K562 (cell line): ENCODE measurements at regions of chr11 and their contacts with region 1.

Region 1: DNA sequence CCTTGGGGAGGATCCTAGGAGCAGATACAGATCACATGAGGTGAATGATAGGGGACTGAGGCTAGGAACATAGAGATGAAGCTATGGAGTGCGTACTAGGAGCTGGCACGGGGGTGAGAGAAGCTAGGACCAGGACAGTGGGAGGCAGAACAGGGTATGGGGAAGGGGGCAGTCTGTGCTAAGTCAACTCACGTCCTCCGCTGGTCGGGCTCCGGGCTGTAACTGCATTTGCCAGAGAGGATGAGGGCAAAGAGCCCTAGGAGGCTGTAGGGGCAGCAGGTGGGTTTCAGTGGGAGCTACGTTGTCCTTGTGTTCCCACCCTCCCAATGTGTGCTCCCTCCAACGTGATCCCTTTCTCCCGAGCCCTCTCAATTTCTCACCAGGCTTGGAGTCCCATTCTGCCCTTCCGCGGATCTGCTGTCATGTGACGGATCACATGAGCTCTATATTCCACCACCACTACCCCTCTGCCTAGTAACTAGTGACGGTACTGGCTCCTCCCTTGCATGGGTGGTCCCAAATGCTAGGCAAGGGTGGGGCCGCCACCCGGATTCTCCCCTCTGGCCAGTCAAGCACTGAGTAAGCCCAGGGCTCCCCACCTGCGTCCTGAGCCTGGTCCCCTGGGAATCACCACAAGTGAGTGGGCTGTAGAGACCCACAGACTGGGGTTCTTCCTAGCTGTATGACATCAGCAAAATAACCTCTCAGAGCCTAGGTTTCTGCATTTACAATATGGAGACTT is at the start of gene TPP1:
- DNase-seq: peak; percentile 92 to 97 (median 94)
- ATAC-seq: peak; percentile 97
- H3K4me3 ChIP-seq: peak within 1 kb of the TSS; percentile 71
- H3K27ac ChIP-seq: peak within 1 kb of the TSS; percentile 86
- H3K4me1 ChIP-seq: peaks cover 8 to 36% of the 10 kb centered on the region in 2 experiments
- H3K27me3 ChIP-seq: peaks cover 0 to 9% of the 10 kb centered on the region in 2 experiments; a peak in 1 of 5 replicates
- CTCF ChIP-seq: no peak
- EP300 ChIP-seq: no peak; the same call in 1 of the 2 replicates
- POLR2A ChIP-seq: peak; percentile 78
- RAD21 ChIP-seq: 0 out of 4 replicates have a peak, but pooled peaks of 1 of the 2 experiments have one; percentile 3
- polyA plus RNA-seq, gene TPP1: 9.4 to 15.7 TPM

Region 2: DNA sequence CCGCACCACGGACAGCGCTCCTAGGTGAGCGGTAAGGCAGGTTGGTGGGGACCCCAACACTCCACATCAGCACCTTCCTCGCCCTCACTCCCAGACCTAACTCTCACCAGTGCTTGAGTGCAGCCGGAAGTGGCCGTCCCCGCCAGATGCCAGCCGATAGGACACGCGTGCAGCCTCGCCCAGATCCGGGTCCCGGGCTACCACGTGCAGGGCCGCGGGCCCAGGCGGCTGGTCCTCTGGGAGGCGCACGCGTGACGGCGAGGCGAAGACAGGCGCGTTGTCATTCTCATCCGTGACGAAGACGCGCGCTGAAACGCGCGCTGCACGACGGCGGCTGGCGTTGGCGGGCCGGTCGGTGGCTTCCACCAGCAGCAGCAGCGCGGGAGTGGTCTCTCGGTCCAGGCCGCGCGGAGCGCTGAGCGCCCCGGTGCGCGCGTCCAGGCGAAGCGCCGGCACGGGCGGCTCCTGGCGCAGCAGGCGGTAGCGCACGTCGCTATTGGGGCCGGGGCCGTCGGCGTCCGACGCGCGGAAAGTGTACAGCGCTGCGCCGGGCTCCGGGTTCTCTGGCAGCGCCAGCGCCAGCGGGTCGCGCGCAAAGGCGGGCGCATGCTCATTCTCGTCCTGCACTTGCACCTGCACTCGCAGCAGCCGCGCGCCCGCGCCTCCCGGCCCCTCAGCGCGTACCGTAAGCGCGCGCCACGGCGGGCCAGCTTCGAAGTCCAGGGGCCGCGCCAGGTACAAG is 10.9 kb after region 1 on chr11:
- CTCF ChIA-PET with region 1: no interaction called
- POLR2A ChIA-PET with region 1: interaction called, 13 read pairs
- in situ Hi-C with region 1: no loop called
- intact Hi-C with region 1: no loop called
- DNase-seq: no peak
- ATAC-seq: no peak
- H3K4me3 ChIP-seq: no peak overlapping the region
- H3K27ac ChIP-seq: no peak overlapping the region
- H3K4me1 ChIP-seq: peaks cover 1 to 17% of the 10 kb centered on the region in 2 experiments; a peak in 3 of 5 replicates
- H3K27me3 ChIP-seq: peaks cover 3 to 21% of the 10 kb centered on the region in 2 experiments; a peak in 4 of 5 replicates
- CTCF ChIP-seq: no peak
- EP300 ChIP-seq: no peak
- POLR2A ChIP-seq: no peak
- RAD21 ChIP-seq: no peak